Tibial artery (tissue), 4 donors: ENCODE measurements at regions of chr17 and their contacts with region 1.

Region 1: GRCh38 chr17:62065598-62066468 is 755 bp upstream of the MED13 start:
- DNase-seq: peak; percentile 99
- H3K4me3 ChIP-seq: peak overlapping the region; percentile 68 to 99
- H3K27ac ChIP-seq: peak overlapping the region; percentile 93 to 98
- H3K4me1 ChIP-seq: peaks cover 0 to 29% (median 24%) of the 10 kb centered on the region in 4 donors
- H3K27me3 ChIP-seq: no peaks in the 10 kb centered on the region
- CTCF ChIP-seq: peak; percentile 90 to 91

Region 2: GRCh38 chr17:61927200-61928165 is 138.3 kb before region 1 on chr17 and contains the start of gene INTS2:
- intact Hi-C with region 1: loop called (anchors 5 kb)
- DNase-seq: peak; percentile 96 to 98
- H3K4me3 ChIP-seq: peak within 1 kb of the TSS; percentile 67
- H3K27ac ChIP-seq: peak within 1 kb of the TSS; percentile 79 to 87
- H3K4me1 ChIP-seq: peaks cover 0 to 22% (median 10%) of the 10 kb centered on the region in 4 donors
- H3K27me3 ChIP-seq: no peaks in the 10 kb centered on the region
- CTCF ChIP-seq: peak in 1 of 2 experiments; percentile 6

Region 3: GRCh38 chr17:62008294-62008693 is 57.5 kb before region 1 on chr17:
- intact Hi-C with region 1: no loop called
- DNase-seq: no peak
- H3K4me3 ChIP-seq: no peak overlapping the region
- H3K27ac ChIP-seq: no peak overlapping the region
- H3K4me1 ChIP-seq: peaks cover 0 to 16% (median 0%) of the 10 kb centered on the region in 4 donors
- H3K27me3 ChIP-seq: no peaks in the 10 kb centered on the region
- CTCF ChIP-seq: no peak